Colonic mucosa (tissue), 4 donors: ENCODE measurements at regions of chr6 and their contacts with region 1.

Region 1: DNA sequence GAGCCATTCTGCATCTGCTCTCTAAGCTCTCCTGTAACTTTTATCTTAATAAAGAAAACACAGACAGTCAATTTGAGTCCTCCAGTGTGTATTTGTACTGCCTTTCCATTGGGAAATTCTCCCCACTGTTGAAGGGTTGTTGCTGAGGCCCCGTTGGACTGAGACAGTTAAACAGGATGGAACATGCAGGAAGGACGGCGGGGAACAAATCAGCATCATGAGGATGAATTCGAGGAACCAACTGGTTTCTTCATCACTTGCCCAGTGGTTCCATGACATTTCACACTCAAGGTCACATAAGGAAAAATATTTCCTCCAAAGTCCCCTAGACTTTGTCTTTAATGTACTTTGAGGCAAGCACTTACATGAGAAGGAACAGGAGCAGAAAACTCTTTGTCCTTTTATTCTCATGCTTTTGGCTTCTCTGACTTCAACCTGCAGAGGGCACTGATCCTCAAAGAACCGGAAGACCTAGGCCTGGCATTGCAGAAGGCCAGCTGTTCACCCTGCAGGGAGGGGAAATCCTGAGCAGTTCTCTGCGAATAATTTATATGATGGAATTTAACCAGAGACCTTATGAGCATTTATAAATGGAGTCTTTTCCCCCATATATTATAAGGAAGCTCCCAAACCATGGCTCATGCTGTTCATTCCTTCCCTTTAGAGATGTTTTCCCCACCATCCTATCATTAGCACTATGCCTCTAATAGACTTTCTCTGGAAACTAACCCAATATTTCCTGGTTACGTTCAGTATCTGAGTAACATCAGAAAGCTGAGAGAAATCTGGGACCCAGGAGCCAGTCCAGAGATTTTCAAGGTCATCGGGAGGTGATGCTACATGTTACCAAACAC is 55.2 kb upstream of the ADGRF1 start:
- DNase-seq: peak; percentile 86
- H3K4me3 ChIP-seq: no peak overlapping the region
- H3K27ac ChIP-seq: no peak overlapping the region
- H3K4me1 ChIP-seq: peaks cover 6% of the 10 kb centered on the region
- H3K27me3 ChIP-seq: no peaks in the 10 kb centered on the region
- CTCF ChIP-seq: peak; percentile 58

Region 2: GRCh38 chr6:47309291-47310130 is 212.2 kb after region 1 on chr6 and contains the start of gene TNFRSF21:
- intact Hi-C with region 1: loop called (anchors 2 kb)
- DNase-seq: peak; percentile 96
- H3K4me3 ChIP-seq: peak within 1 kb of the TSS; percentile 88
- H3K27ac ChIP-seq: peak within 1 kb of the TSS; percentile 93
- H3K4me1 ChIP-seq: no peaks in the 10 kb centered on the region
- H3K27me3 ChIP-seq: no peaks in the 10 kb centered on the region
- CTCF ChIP-seq: peak; percentile 86
- total RNA-seq, gene TNFRSF21: 74.0 to 102 TPM